Left ventricle myocardium inferior (tissue), 1 donor: ENCODE measurements at regions of chr22 and their contacts with region 1.

Region 1: GRCh38 chr22:21629262-21630149 is at the start of gene YDJC:
- DNase-seq: peak; percentile 93
- H3K4me3 ChIP-seq: peak within 1 kb of the TSS; percentile 90
- H3K27ac ChIP-seq: peak within 1 kb of the TSS; percentile 75
- H3K4me1 ChIP-seq: peaks cover 42% of the 10 kb centered on the region
- H3K27me3 ChIP-seq: no peaks in the 10 kb centered on the region
- CTCF ChIP-seq: peak; percentile 96
- total RNA-seq, gene YDJC: 4.5 TPM

Region 2: GRCh38 chr22:21569459-21570170 is 59.9 kb before region 1 on chr22:
- intact Hi-C with region 1: loop called (anchors 10 kb)
- DNase-seq: no peak
- H3K4me3 ChIP-seq: peak overlapping the region; percentile 92
- H3K27ac ChIP-seq: no peak overlapping the region
- H3K4me1 ChIP-seq: peaks cover 70% of the 10 kb centered on the region
- H3K27me3 ChIP-seq: no peaks in the 10 kb centered on the region
- CTCF ChIP-seq: no peak